B cell (primary cell): ENCODE measurements at regions of chr1 and their contacts with region 1.

Region 1: DNA sequence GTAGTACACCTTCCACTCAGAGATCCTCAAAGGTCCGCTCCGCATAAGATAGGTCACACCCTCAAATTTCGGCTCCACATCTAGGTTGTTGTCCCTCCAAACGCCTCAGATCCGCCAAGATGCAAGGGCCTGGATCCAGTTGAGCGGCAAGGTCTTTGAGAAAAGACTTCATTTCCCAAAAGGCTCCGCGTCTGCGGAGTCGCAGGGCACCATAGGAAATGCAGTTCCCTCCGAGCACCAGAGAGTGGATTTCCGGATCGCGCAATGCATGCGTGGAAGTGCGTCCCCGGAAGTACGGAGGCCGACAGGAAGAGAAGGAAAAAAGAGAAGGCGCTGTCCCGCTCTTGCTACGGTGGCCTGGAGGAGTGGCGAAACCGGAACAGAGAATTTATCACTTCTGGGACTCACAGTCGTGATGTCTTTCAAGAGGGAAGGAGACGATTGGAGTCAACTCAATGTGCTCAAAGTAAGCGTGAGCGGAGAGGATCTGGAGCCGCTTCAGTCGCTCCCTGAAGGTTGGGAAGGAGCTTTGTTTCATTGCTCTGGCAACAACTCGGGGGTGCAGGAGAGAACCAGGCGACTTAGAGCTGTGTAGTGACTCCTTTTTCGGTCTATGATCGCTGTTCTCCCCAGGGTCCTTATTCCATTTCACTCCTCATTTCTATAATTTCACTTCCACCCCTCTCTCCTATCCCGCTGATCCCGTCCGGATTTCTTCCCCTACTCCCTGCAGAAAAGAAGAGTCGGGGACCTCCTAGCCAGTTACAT is at the starts of genes LYSMD1 and SCNM1:
- DNase-seq: peak; percentile 99
- ATAC-seq: peak; percentile 98
- H3K4me3 ChIP-seq: peak within 1 kb of the TSS; percentile 81 to 99 (median 92)
- H3K4me3 Mint-ChIP-seq: peak within 1 kb of the TSS; percentile 92
- H3K27ac ChIP-seq: peak within 1 kb of the TSS; percentile 26 to 80
- H3K27ac Mint-ChIP-seq: peak within 1 kb of the TSS; percentile 96
- H3K4me1 ChIP-seq: peaks cover 16 to 22% of the 10 kb centered on the region in 2 donors
- H3K4me1 Mint-ChIP-seq: peaks cover 37% of the 10 kb centered on the region
- H3K27me3 ChIP-seq: no peaks in the 10 kb centered on the region
- H3K27me3 Mint-ChIP-seq: no peaks in the 10 kb centered on the region
- CTCF ChIP-seq: no peak
- total RNA-seq, gene LYSMD1: 5.8 TPM in 2 replicates
- total RNA-seq, gene SCNM1: 53.6 and 57.6 TPM in 2 replicates

Region 2: GRCh38 chr1:150765296-150765976 is 400.5 kb before region 1 on chr1 and contains the start of gene CTSS:
- CTCF ChIA-PET with region 1: no interaction called
- POLR2A ChIA-PET with region 1: no interaction called
- intact Hi-C with region 1: loop called (anchors 10 kb)
- DNase-seq: peak; percentile 86
- ATAC-seq: peak; percentile 87
- H3K4me3 ChIP-seq: peak within 1 kb of the TSS; percentile 62 to 99 (median 80)
- H3K4me3 Mint-ChIP-seq: peak within 1 kb of the TSS; percentile 96
- H3K27ac ChIP-seq: peak within 1 kb of the TSS; percentile 85 to 97
- H3K27ac Mint-ChIP-seq: peak within 1 kb of the TSS; percentile 97
- H3K4me1 ChIP-seq: peaks cover 36 to 40% of the 10 kb centered on the region in 2 donors
- H3K4me1 Mint-ChIP-seq: peaks cover 45% of the 10 kb centered on the region
- H3K27me3 ChIP-seq: no peaks in the 10 kb centered on the region
- H3K27me3 Mint-ChIP-seq: no peaks in the 10 kb centered on the region
- CTCF ChIP-seq: no peak
- total RNA-seq, gene CTSS: 221 and 241 TPM in 2 replicates

Region 3: GRCh38 chr1:151146412-151147140 is 19.3 kb before region 1 on chr1 and contains the start of gene SEMA6C:
- CTCF ChIA-PET with region 1: no interaction called
- POLR2A ChIA-PET with region 1: no interaction called
- intact Hi-C with region 1: loop called (anchors 1 kb)
- DNase-seq: peak; percentile 86
- ATAC-seq: peak; percentile 100
- H3K4me3 ChIP-seq: peak within 1 kb of the TSS; percentile 59 to 86 (median 84)
- H3K4me3 Mint-ChIP-seq: peak within 1 kb of the TSS; percentile 94
- H3K27ac ChIP-seq: peak within 1 kb of the TSS in 1 of 2 donors; percentile 43
- H3K27ac Mint-ChIP-seq: peak within 1 kb of the TSS; percentile 20
- H3K4me1 ChIP-seq: peaks cover 15 to 19% of the 10 kb centered on the region in 2 donors
- H3K4me1 Mint-ChIP-seq: peaks cover 23% of the 10 kb centered on the region
- H3K27me3 ChIP-seq: peaks cover 0 to 20% (median 8%) of the 10 kb centered on the region in 4 experiments
- H3K27me3 Mint-ChIP-seq: peaks cover 9% of the 10 kb centered on the region
- CTCF ChIP-seq: no peak
- total RNA-seq, gene SEMA6C: 0.86 and 1.5 TPM in 2 replicates

Region 4: GRCh38 chr1:151198255-151199127 is 32.6 kb after region 1 on chr1 and contains the start of gene PIP5K1A:
- CTCF ChIA-PET with region 1: no interaction called
- POLR2A ChIA-PET with region 1: no interaction called
- intact Hi-C with region 1: loop called (anchors 2 kb)
- DNase-seq: peak; percentile 98
- ATAC-seq: peak; percentile 98
- H3K4me3 ChIP-seq: peak within 1 kb of the TSS; percentile 82 to 96 (median 95)
- H3K4me3 Mint-ChIP-seq: peak within 1 kb of the TSS; percentile 98
- H3K27ac ChIP-seq: peak within 1 kb of the TSS; percentile 87 to 90
- H3K27ac Mint-ChIP-seq: peak within 1 kb of the TSS; percentile 94
- H3K4me1 ChIP-seq: peaks cover 21 to 29% of the 10 kb centered on the region in 2 donors
- H3K4me1 Mint-ChIP-seq: peaks cover 47% of the 10 kb centered on the region
- H3K27me3 ChIP-seq: peaks cover 0 to 2% (median 0%) of the 10 kb centered on the region in 4 experiments
- H3K27me3 Mint-ChIP-seq: no peaks in the 10 kb centered on the region
- CTCF ChIP-seq: no peak
- total RNA-seq, gene PIP5K1A: 76.1 and 78.4 TPM in 2 replicates

Region 5: GRCh38 chr1:151346769-151347522 is 181.0 kb after region 1 on chr1 and contains the start of gene RFX5:
- CTCF ChIA-PET with region 1: no interaction called
- POLR2A ChIA-PET with region 1: no interaction called
- intact Hi-C with region 1: loop called (anchors 10 kb)
- DNase-seq: peak; percentile 99
- ATAC-seq: peak; percentile 91
- H3K4me3 ChIP-seq: peak within 1 kb of the TSS; percentile 81 to 95 (median 85)
- H3K4me3 Mint-ChIP-seq: peak within 1 kb of the TSS; percentile 92
- H3K27ac ChIP-seq: peak within 1 kb of the TSS; percentile 98 to 99
- H3K27ac Mint-ChIP-seq: peak within 1 kb of the TSS; percentile 97
- H3K4me1 ChIP-seq: peaks cover 34 to 44% of the 10 kb centered on the region in 2 donors
- H3K4me1 Mint-ChIP-seq: peaks cover 49% of the 10 kb centered on the region
- H3K27me3 ChIP-seq: no peaks in the 10 kb centered on the region
- H3K27me3 Mint-ChIP-seq: no peaks in the 10 kb centered on the region
- CTCF ChIP-seq: no peak
- total RNA-seq, gene RFX5: 207 and 208 TPM in 2 replicates